IMR-90 (cell line): ENCODE measurements at regions of chr10 and their contacts with region 1.

Region 1: DNA sequence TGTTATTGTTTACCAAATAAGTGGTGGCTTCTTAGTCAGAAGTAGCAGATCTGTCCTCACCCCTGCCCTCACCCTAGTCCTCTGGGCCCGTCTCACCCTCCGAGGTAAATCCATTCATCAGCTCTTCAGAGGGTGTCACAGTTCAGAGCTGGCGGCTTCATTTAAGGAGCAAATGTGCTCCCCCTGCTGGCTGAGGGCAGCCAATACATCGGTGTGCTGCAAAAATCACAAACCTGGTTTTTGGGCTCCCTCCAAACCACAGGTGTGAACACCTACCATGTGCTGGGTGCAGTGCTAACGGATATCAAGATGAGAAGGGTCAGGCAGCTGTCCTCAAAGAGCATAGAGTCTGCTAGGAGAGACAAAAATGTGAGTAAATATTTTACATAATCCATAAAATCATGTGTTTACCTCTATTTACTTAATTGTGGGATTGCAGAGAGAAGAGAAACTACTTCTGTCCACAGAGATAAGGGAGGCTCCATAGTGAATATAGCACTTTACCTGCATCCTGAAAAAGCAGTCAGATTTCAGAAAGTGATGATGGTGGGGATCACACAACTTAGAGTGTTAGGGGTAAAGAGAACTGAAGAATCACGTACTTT is 15.5 kb upstream of the CRTAC1 start:
- DNase-seq: peak; percentile 40
- ATAC-seq: peak; percentile 92
- H3K4me3 ChIP-seq: no peak overlapping the region
- H3K27ac ChIP-seq: no peak overlapping the region
- H3K4me1 ChIP-seq: no peaks in the 10 kb centered on the region
- H3K27me3 ChIP-seq: peaks cover 12% of the 10 kb centered on the region
- CTCF ChIP-seq: peak; percentile 67
- POLR2A ChIP-seq: no peak
- RAD21 ChIP-seq: peak; percentile 46

Region 2: GRCh38 chr10:97792141-97792721 is 253.7 kb before region 1 on chr10:
- CTCF ChIA-PET with region 1: interaction called, 4 read pairs
- POLR2A ChIA-PET with region 1: no interaction called
- dilution Hi-C with region 1: no loop called
- in situ Hi-C with region 1: loop called (anchors 25 kb)
- intact Hi-C with region 1: loop called (anchors 1 kb)
- DNase-seq: peak; percentile 46
- ATAC-seq: peak; percentile 96
- H3K4me3 ChIP-seq: no peak overlapping the region
- H3K27ac ChIP-seq: no peak overlapping the region
- H3K4me1 ChIP-seq: no peaks in the 10 kb centered on the region
- H3K27me3 ChIP-seq: peaks cover 18% of the 10 kb centered on the region
- CTCF ChIP-seq: peak; percentile 75
- POLR2A ChIP-seq: no peak
- RAD21 ChIP-seq: peak; percentile 73

Region 3: GRCh38 chr10:97914837-97915211 is 131.1 kb before region 1 on chr10:
- CTCF ChIA-PET with region 1: interaction called, 16 read pairs
- POLR2A ChIA-PET with region 1: no interaction called
- dilution Hi-C with region 1: no loop called
- in situ Hi-C with region 1: loop called (anchors 10 kb)
- intact Hi-C with region 1: loop called (anchors 1 kb)
- DNase-seq: peak; percentile 37
- ATAC-seq: peak; percentile 97
- H3K4me3 ChIP-seq: no peak overlapping the region
- H3K27ac ChIP-seq: no peak overlapping the region
- H3K4me1 ChIP-seq: no peaks in the 10 kb centered on the region
- H3K27me3 ChIP-seq: peaks cover 27% of the 10 kb centered on the region
- CTCF ChIP-seq: peak; percentile 80
- POLR2A ChIP-seq: no peak
- RAD21 ChIP-seq: peak; percentile 86

Region 4: GRCh38 chr10:97974526-97975525 is 71.1 kb before region 1 on chr10:
- CTCF ChIA-PET with region 1: no interaction called
- POLR2A ChIA-PET with region 1: no interaction called
- dilution Hi-C with region 1: no loop called
- in situ Hi-C with region 1: no loop called
- intact Hi-C with region 1: no loop called
- DNase-seq: no peak
- ATAC-seq: no peak
- H3K4me3 ChIP-seq: no peak overlapping the region
- H3K27ac ChIP-seq: no peak overlapping the region
- H3K4me1 ChIP-seq: no peaks in the 10 kb centered on the region
- H3K27me3 ChIP-seq: peaks cover 27% of the 10 kb centered on the region
- CTCF ChIP-seq: no peak
- POLR2A ChIP-seq: no peak
- RAD21 ChIP-seq: no peak